Activated T-helper 2 cell treated with anti-CD3 and anti-CD28 coated beads, Interferon-gamma antibody, Interleukin-2, Interleukin-4, amounts not matched to agents 10 μg/mL and 5 μg/mL and 100 μg/mL, durations not matched to agents 14 hours and 24 hours and 36 hours (primary cell): ENCODE measurements at regions of chr12 and their contacts with region 1.

Region 1: GRCh38 chr12:1795785-1796514 is 24.4 kb upstream of the LRTM2 start:
- DNase-seq: peak; percentile 93
- H3K4me3 Mint-ChIP-seq: peak overlapping the region; percentile 86
- H3K27ac Mint-ChIP-seq: peak overlapping the region; percentile 89
- H3K4me1 Mint-ChIP-seq: peaks cover 16% of the 10 kb centered on the region
- H3K27me3 Mint-ChIP-seq: no peaks in the 10 kb centered on the region

Region 2: DNA sequence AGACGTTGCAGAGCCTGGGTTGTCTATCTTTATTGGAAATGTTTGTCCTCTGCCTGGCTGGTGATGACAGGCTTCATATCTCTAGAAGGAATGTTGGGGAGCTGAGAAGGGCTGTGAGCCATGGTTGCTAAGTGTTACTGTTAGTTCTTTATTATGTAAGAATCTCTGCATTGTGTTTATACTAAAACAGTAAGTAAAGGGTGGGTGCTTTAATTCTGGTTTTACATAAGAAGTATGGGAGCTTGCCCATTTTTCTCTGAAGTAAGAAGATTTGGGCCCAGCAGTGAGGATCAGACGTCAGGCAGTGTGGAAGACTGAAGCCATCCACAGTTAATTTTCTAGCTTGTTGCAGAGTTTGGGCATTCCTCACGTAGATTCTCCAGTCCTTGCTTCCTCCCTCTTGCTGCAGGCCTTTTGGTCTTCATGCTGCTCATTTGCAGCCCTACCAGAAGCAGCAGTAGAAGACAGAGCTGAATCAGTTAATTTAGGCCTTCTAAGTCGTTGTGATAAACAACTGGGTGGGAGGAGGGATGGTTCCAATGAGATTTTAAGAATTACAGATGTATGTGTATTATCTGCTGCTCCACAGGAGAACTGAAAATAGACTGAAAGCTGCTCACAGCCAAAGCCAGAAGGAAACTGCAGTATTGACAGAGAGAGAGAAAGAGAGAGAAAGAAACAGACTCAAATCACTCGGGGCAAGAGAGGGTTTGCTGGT is 145.5 kb before region 1 on chr12:
- intact Hi-C with region 1: loop called (anchors 1 kb)
- DNase-seq: no peak
- H3K4me3 Mint-ChIP-seq: no peak overlapping the region
- H3K27ac Mint-ChIP-seq: no peak overlapping the region
- H3K4me1 Mint-ChIP-seq: peaks cover 8% of the 10 kb centered on the region
- H3K27me3 Mint-ChIP-seq: peaks cover 35% of the 10 kb centered on the region

Region 3: DNA sequence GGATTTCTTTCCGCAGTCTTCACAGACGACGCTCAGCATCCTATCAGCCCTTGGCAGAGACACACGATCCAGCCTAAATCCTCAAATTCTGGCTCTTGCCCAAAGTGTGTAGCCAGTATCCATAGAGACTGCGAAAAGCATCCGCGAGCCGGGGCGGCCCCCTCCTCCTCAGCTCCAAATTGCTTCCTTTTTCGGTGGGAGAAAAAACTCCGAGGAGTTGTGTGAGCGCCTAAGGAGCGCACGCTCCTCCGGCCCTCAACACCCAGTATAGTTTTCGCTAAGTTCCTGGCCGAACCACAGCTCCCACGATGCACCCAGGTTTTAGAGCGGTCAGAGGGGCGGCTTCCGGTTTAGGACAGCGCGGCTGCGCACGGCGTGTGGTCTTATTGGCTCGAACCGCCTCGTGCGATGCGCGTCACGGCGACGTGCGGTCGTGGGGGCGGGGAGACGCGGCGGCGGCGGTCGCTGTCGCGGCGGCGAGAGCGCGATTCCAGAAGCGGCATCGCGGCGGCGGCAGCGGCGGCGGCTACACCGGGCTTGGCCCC is 105.3 kb before region 1 on chr12 and contains the start of gene ADIPOR2:
- intact Hi-C with region 1: loop called (anchors 1 kb)
- DNase-seq: peak; percentile 94
- H3K4me3 Mint-ChIP-seq: peak within 1 kb of the TSS; percentile 100
- H3K27ac Mint-ChIP-seq: peak within 1 kb of the TSS; percentile 99
- H3K4me1 Mint-ChIP-seq: peaks cover 36% of the 10 kb centered on the region
- H3K27me3 Mint-ChIP-seq: peaks cover 14% of the 10 kb centered on the region
- total RNA-seq, gene ADIPOR2: 69.2 and 81.0 TPM in 2 replicates

Region 4: GRCh38 chr12:1939801-1940607 is 144.1 kb after region 1 on chr12:
- intact Hi-C with region 1: loop called (anchors 1 kb)
- DNase-seq: peak; percentile 77
- H3K4me3 Mint-ChIP-seq: no peak overlapping the region
- H3K27ac Mint-ChIP-seq: no peak overlapping the region
- H3K4me1 Mint-ChIP-seq: peaks cover 2% of the 10 kb centered on the region
- H3K27me3 Mint-ChIP-seq: no peaks in the 10 kb centered on the region

Region 5: DNA sequence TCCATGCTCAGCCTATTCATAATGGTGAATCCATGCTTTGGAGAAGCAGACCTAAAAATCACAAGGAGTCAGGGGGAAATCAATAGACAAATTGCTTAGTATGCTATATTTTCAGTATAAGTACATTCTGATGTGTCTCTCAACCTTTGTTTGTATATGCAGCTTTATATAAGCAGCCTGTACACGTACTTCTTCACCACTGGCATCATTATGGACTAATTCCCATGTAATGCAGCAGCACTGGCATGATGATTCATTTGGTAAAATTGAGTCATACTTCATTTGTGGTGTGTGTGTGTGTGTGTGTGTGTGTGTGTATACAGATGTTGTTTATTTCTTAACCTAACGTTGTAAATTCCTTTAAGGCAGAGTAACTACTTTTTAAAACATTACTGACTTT is 197.4 kb after region 1 on chr12:
- intact Hi-C with region 1: loop called (anchors 2 kb)
- DNase-seq: no peak
- H3K4me3 Mint-ChIP-seq: no peak overlapping the region
- H3K27ac Mint-ChIP-seq: no peak overlapping the region
- H3K4me1 Mint-ChIP-seq: peaks cover 30% of the 10 kb centered on the region
- H3K27me3 Mint-ChIP-seq: no peaks in the 10 kb centered on the region

Region 6: DNA sequence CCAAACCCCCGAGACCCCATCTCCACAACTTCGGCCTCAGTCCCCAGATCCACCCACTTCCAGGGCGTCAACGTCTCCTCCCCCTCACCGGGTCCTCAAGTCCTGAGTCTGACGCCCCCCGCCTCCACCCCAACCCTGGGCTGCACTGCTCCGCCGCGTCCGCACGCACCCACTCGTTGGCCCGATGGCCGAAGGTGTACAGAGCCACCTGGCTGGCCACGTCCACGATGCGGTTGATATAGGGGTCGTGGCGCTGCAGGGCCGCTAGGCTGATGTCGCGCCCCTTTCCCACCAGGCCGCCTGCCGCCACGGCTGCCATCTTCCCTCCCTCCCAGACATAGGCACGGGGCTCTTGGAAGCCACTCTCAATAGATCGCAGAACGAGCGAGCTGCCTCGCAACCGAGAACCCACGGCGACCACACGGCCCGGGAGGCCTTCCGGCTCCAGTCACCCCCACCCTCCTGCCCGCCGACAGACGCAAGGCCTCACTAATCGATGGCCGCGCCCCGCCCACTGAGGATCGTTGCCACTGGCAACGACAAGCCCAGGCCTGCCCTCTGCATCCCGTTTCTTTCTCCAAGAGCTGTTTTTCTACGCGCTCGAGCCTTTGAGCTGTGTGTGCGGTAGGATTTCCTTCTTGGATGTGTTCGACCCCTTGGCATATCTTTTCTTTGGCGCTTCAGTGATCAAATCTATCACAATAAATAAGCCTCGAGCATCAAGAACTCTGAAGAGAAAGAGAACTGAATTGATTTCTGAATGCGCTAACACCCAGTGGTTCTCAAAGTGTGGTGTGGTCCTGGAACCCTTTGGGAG is 208.4 kb after region 1 on chr12 and contains the start of gene DCP1B:
- intact Hi-C with region 1: loop called (anchors 1 kb)
- DNase-seq: peak; percentile 93
- H3K4me3 Mint-ChIP-seq: peak within 1 kb of the TSS; percentile 97
- H3K27ac Mint-ChIP-seq: peak within 1 kb of the TSS; percentile 96
- H3K4me1 Mint-ChIP-seq: peaks cover 16% of the 10 kb centered on the region
- H3K27me3 Mint-ChIP-seq: peaks cover 6% of the 10 kb centered on the region
- total RNA-seq, gene DCP1B: 9.2 and 10.2 TPM in 2 replicates

Region 7: GRCh38 chr12:2034633-2035430 is 238.9 kb after region 1 on chr12:
- intact Hi-C with region 1: loop called (anchors 2 kb)
- DNase-seq: peak; percentile 79
- H3K4me3 Mint-ChIP-seq: peak overlapping the region; percentile 38
- H3K27ac Mint-ChIP-seq: no peak overlapping the region
- H3K4me1 Mint-ChIP-seq: peaks cover 11% of the 10 kb centered on the region
- H3K27me3 Mint-ChIP-seq: peaks cover 53% of the 10 kb centered on the region